ENCODE measurements at regions of chr10 and their contacts with region 1.

Region 1: GRCh38 chr10:4656576-4657182 is 169.3 kb upstream of the AKR1E2 start:
- DNase-seq: peak; percentile 44
- ATAC-seq: no peak
- H3K4me3 ChIP-seq: no peak overlapping the region
- H3K27ac ChIP-seq: no peak overlapping the region
- H3K4me1 ChIP-seq: peaks cover 21% of the 10 kb centered on the region
- H3K27me3 ChIP-seq: peaks cover 0 to 14% of the 10 kb centered on the region in 2 experiments; a peak in 1 of 5 replicates
- CTCF ChIP-seq: peak; percentile 80
- EP300 ChIP-seq: no peak
- POLR2A ChIP-seq: no peak
- RAD21 ChIP-seq: peak; percentile 53; the same call in 1 of the 2 replicates

Region 2: DNA sequence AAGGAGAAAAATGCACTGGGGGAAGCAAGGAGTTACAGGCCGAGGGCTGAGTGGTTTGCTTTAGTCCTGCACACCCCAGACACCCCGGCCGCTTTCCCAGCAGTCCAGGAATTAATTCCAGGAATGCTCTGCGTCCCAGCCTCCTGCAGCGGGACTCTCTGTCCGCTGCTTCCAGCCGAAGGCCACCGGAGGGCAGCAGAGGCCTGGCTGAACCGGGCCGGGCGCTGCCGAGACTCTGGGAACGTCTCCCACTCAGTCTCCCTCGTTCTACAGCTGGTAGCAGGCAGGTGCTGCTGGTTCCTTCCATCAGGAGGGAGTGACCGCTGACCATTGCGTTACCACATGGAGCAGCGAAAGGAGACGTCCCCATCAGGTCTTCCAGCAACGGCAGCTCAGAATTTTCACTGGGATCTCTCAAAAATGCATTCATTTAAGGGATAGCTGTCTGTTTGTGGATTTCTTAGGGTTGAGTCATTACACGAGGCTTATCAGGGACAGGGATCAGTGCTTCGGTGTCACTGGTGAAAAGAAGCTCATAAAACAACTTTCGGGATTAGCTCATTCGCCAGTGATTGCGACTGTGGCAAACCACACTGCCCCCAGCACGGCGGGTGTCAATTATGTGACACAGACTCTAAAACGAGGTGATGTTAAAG is 1459.2 kb before region 1 on chr10:
- CTCF ChIA-PET with region 1: interaction called, 4 read pairs
- POLR2A ChIA-PET with region 1: no interaction called
- in situ Hi-C with region 1: no loop called
- intact Hi-C with region 1: loop called (anchors 5 kb)
- DNase-seq: peak; percentile 36
- ATAC-seq: peak; percentile 98
- H3K4me3 ChIP-seq: no peak overlapping the region
- H3K27ac ChIP-seq: no peak overlapping the region
- H3K4me1 ChIP-seq: 0 out of 2 replicates have a peak, but pooled peaks cover 4% of the 10 kb centered on the region
- H3K27me3 ChIP-seq: peaks cover 10 to 78% of the 10 kb centered on the region in 2 experiments
- CTCF ChIP-seq: peak; percentile 93
- EP300 ChIP-seq: no peak
- POLR2A ChIP-seq: no peak
- RAD21 ChIP-seq: peak; percentile 91

Region 3: GRCh38 chr10:3248888-3249758 is 1407.6 kb before region 1 on chr10:
- CTCF ChIA-PET with region 1: no interaction called
- POLR2A ChIA-PET with region 1: no interaction called
- in situ Hi-C with region 1: loop called (anchors 10 kb)
- intact Hi-C with region 1: no loop called
- DNase-seq: no peak
- ATAC-seq: no peak
- H3K4me3 ChIP-seq: no peak overlapping the region
- H3K27ac ChIP-seq: no peak overlapping the region
- H3K4me1 ChIP-seq: no peaks in the 10 kb centered on the region
- H3K27me3 ChIP-seq: peaks cover 0 to 54% of the 10 kb centered on the region in 2 experiments; a peak in 4 of 5 replicates
- CTCF ChIP-seq: no peak
- EP300 ChIP-seq: no peak
- POLR2A ChIP-seq: no peak
- RAD21 ChIP-seq: no peak